ENCODE measurements at regions of chr15 and their contacts with region 1.

Region 1: GRCh38 chr15:85794603-85795336 is at the start of gene KLHL25:
- DNase-seq: peak; percentile 93 to 95
- ATAC-seq: peak; percentile 94 to 97
- H3K4me3 ChIP-seq: peak within 1 kb of the TSS; percentile 75 to 98 (median 92)
- H3K27ac ChIP-seq: peak within 1 kb of the TSS; percentile 86 to 99 (median 98)
- H3K4me1 ChIP-seq: peaks cover 20 to 23% of the 10 kb centered on the region in 2 donors
- H3K27me3 ChIP-seq: no peaks in the 10 kb centered on the region
- CTCF ChIP-seq: no peak
- POLR2A ChIP-seq: peak; percentile 83 to 92
- total RNA-seq, gene KLHL25: 4.8 to 7.0 (median 6.8) TPM

Region 2: GRCh38 chr15:85618956-85619491 is 175.7 kb before region 1 on chr15:
- in situ Hi-C with region 1: no loop called
- intact Hi-C with region 1: loop called (anchors 10 kb)
- DNase-seq: peak; percentile 80 to 81
- ATAC-seq: peak; percentile 68 to 77
- H3K4me3 ChIP-seq: peak overlapping the region; percentile 41 to 67 (median 54)
- H3K27ac ChIP-seq: peak overlapping the region; percentile 81 to 86 (median 82)
- H3K4me1 ChIP-seq: peaks cover 88 to 99% of the 10 kb centered on the region in 2 donors
- H3K27me3 ChIP-seq: no peaks in the 10 kb centered on the region
- CTCF ChIP-seq: no peak
- POLR2A ChIP-seq: peak; percentile 54 to 78

Region 3: GRCh38 chr15:85730001-85730820 is 64.6 kb before region 1 on chr15:
- in situ Hi-C with region 1: no loop called
- intact Hi-C with region 1: loop called (anchors 5 kb)
- DNase-seq: no peak
- ATAC-seq: peak; percentile 45 to 65
- H3K4me3 ChIP-seq: no peak overlapping the region
- H3K27ac ChIP-seq: peak overlapping the region; percentile 53 to 82 (median 63)
- H3K4me1 ChIP-seq: peaks cover 4 to 9% of the 10 kb centered on the region in 2 donors
- H3K27me3 ChIP-seq: no peaks in the 10 kb centered on the region
- CTCF ChIP-seq: peak; percentile 73 to 82 (median 76)
- POLR2A ChIP-seq: no peak

Region 4: GRCh38 chr15:85750319-85750806 is 44.4 kb before region 1 on chr15:
- in situ Hi-C with region 1: no loop called
- intact Hi-C with region 1: loop called (anchors 5 kb)
- DNase-seq: peak; percentile 44 to 72
- ATAC-seq: peak; percentile 78 to 79
- H3K4me3 ChIP-seq: peak overlapping the region; percentile 35 to 45 (median 40)
- H3K27ac ChIP-seq: peak overlapping the region; percentile 80 to 84 (median 81)
- H3K4me1 ChIP-seq: peaks cover 38 to 41% of the 10 kb centered on the region in 2 donors
- H3K27me3 ChIP-seq: no peaks in the 10 kb centered on the region
- CTCF ChIP-seq: no peak
- POLR2A ChIP-seq: no peak

Region 5: DNA sequence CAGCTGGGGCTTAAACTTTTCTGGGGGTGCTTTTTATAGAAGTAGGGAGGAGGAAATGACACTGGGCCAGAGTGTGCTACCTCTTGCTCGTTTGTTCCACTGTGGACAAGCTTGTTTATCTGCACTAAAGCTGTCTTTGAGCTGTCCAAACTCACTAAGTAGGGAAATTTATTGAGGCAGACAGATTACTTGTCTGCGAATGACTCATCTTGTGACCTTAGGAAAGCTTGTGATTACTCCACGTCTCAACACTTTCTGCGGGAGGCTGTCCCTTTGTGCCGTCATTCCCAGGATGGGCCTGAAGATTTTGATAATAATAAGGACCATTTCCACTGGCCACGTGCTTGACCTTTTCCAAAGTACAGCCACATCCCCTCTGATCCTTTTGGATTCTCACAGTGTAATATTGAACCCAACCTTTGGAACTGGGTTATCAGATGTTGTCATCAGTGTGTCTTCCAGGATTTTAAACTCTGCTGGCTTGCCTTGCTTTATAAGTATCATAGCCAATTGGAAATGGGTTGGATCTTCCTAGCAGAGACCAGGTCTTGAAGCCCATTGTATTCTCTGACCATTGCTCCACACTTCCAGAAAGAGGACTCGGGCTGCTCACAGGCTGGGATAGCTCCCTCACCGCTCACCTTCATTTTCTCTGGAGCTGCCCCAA is 369.6 kb after region 1 on chr15:
- in situ Hi-C with region 1: no loop called
- intact Hi-C with region 1: loop called (anchors 10 kb)
- DNase-seq: peak; percentile 75 to 76
- ATAC-seq: peak; percentile 72 to 81
- H3K4me3 ChIP-seq: no peak overlapping the region
- H3K27ac ChIP-seq: peak overlapping the region; percentile 85 to 98 (median 98)
- H3K4me1 ChIP-seq: peaks cover 63 to 67% of the 10 kb centered on the region in 2 donors
- H3K27me3 ChIP-seq: no peaks in the 10 kb centered on the region
- CTCF ChIP-seq: no peak
- POLR2A ChIP-seq: peak; percentile 56 to 78

Measured in gastrocnemius medialis (tissue), 4 donors.